HepG2 (cell line): ENCODE measurements at regions of chr7 and their contacts with region 1.

Region 1: DNA sequence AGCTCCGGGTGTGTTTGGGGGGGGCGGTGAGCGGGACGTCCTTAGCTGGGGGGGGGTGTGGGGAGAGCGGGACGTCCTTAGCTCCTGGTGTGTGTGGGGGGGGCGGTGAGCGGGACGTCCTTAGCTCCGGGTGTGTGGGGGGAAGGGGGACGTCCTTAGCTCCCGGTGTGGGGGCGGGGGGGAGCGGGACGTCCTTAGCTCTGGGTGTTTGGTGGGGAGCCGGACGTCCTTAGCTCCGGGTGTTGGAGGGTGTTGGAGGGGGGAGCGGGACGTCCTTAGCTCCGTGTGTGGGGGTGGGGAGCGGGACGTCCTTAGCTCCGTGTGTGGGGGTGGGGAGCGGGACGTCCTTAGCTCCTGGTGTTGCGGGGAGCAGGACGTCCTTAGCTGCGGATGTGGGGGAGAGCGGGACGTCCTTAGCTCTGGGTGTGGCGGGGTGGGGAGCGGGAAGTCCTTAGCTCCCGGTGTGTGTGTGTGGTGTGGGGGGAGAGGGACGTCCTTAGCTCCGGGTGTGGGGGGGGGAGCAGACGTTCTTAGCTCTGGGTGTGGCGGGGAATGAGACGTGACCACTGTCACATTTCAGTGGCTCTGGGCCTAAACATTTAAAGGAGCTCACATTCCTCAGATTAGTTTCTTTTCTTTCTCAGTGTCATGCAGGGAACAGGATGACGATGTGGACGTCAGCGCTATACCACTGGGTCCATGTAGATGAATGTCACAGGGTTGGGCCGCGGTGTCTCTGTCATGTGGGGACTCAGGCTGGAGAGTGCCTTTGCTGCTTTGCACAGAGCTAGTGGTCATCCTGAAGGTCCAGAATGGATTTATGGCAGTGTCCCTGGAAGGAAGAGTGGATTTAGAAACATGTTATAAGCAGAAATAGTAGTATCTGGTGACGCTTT is 7.5 kb downstream of the DYNC2I1 start:
- DNase-seq: peak; percentile 38
- ATAC-seq: peak; percentile 70
- H3K4me3 ChIP-seq: peak overlapping the region; percentile 46 to 71 (median 67); a peak in 5 of 6 replicates
- H3K27ac ChIP-seq: peak overlapping the region; percentile 61
- H3K4me1 ChIP-seq: peaks cover 61% of the 10 kb centered on the region
- H3K27me3 ChIP-seq: no peaks in the 10 kb centered on the region
- CTCF ChIP-seq: no peak
- EP300 ChIP-seq: no peak; a peak in 1 of 4 replicates
- POLR2A ChIP-seq: peak in 1 of 2 experiments; percentile 49; a peak in 1 of 4 replicates
- RAD21 ChIP-seq: no peak

Region 2: DNA sequence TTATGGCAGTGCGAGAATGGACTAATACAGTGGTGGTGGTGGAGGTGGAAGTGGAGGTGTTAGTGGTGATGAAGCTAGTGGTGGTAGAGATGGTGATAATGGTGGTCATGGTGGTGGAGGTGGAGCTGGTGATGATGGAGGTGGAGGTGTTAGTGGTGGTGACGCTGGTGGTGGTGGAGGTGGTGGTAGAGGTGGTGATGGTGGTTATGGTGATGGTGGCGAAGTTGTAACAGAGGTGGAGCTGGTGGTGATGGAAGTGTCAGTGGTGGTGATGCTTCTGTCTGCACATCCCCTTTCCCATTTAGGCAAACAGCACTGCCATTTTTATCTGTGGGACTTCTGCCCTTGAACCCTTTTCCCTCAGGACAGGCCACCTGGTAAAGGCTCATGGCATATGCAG is 268.8 kb before region 1 on chr7:
- CTCF ChIA-PET with region 1: no interaction called
- POLR2A ChIA-PET with region 1: no interaction called
- in situ Hi-C with region 1: no loop called
- intact Hi-C with region 1: no loop called
- DNase-seq: no peak
- ATAC-seq: no peak
- H3K4me3 ChIP-seq: no peak overlapping the region
- H3K27ac ChIP-seq: no peak overlapping the region
- H3K4me1 ChIP-seq: peaks cover 31% of the 10 kb centered on the region
- H3K27me3 ChIP-seq: no peaks in the 10 kb centered on the region
- CTCF ChIP-seq: no peak
- EP300 ChIP-seq: no peak
- POLR2A ChIP-seq: no peak
- RAD21 ChIP-seq: no peak

Region 3: GRCh38 chr7:158704704-158705468 is 159.0 kb before region 1 on chr7 and contains the start of gene NCAPG2:
- CTCF ChIA-PET with region 1: no interaction called
- POLR2A ChIA-PET with region 1: interaction called, 10 read pairs
- in situ Hi-C with region 1: no loop called
- intact Hi-C with region 1: no loop called
- DNase-seq: peak; percentile 94
- ATAC-seq: peak; percentile 96
- H3K4me3 ChIP-seq: peak within 1 kb of the TSS; percentile 77 to 99 (median 98)
- H3K27ac ChIP-seq: peak within 1 kb of the TSS; percentile 71
- H3K4me1 ChIP-seq: peaks cover 53% of the 10 kb centered on the region
- H3K27me3 ChIP-seq: no peaks in the 10 kb centered on the region; a peak in 1 of 5 replicates
- CTCF ChIP-seq: peak; percentile 41; the same call in 1 of the 2 replicates
- EP300 ChIP-seq: no peak
- POLR2A ChIP-seq: peak; percentile 34 to 84; a peak in 3 of 4 replicates
- RAD21 ChIP-seq: peak; percentile 35; the same call in 1 of the 2 replicates
- total RNA-seq, gene NCAPG2: 30.7 and 46.3 TPM in 2 replicates

Region 4: DNA sequence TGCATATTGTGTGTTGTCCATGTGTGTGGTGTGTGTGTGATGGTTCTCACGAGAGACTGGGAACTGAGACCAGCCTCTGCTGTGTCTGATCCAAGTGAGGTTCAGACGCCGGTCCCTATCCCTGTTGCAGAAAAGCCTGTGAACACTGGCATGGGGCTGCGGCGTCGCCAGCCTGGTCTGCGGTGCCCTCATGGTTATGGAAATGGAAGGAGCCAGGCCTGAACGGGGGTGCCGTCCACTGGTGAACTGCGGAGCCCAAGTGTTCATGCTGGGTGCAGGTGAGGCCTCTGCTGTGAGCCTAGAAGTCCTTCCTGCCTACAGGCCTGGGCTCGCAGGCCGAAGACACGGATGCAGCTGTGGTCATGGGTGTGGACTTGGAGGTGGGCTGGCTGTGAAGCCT is 140.6 kb before region 1 on chr7:
- CTCF ChIA-PET with region 1: no interaction called
- POLR2A ChIA-PET with region 1: no interaction called
- in situ Hi-C with region 1: no loop called
- intact Hi-C with region 1: no loop called
- DNase-seq: no peak
- ATAC-seq: peak; percentile 37
- H3K4me3 ChIP-seq: no peak overlapping the region
- H3K27ac ChIP-seq: no peak overlapping the region
- H3K4me1 ChIP-seq: no peaks in the 10 kb centered on the region
- H3K27me3 ChIP-seq: no peaks in the 10 kb centered on the region; a peak in 2 of 5 replicates
- CTCF ChIP-seq: no peak
- EP300 ChIP-seq: no peak
- POLR2A ChIP-seq: no peak
- RAD21 ChIP-seq: no peak

Region 5: GRCh38 chr7:158829342-158830210 is 34.3 kb before region 1 on chr7 and contains the start of gene ESYT2:
- CTCF ChIA-PET with region 1: no interaction called
- POLR2A ChIA-PET with region 1: interaction called, 19 read pairs
- in situ Hi-C with region 1: no loop called
- intact Hi-C with region 1: no loop called
- DNase-seq: peak; percentile 83
- ATAC-seq: peak; percentile 77
- H3K4me3 ChIP-seq: peak within 1 kb of the TSS; percentile 77 to 96 (median 90)
- H3K27ac ChIP-seq: peak within 1 kb of the TSS; percentile 90
- H3K4me1 ChIP-seq: peaks cover 41% of the 10 kb centered on the region
- H3K27me3 ChIP-seq: no peaks in the 10 kb centered on the region; a peak in 1 of 5 replicates
- CTCF ChIP-seq: peak; percentile 58
- EP300 ChIP-seq: no peak
- POLR2A ChIP-seq: peak; percentile 88 to 95
- RAD21 ChIP-seq: peak; percentile 60
- total RNA-seq, gene ESYT2: 26.0 and 37.3 TPM in 2 replicates